Dorsolateral prefrontal cortex (tissue), 120 donors: ENCODE measurements at regions of chr3 and their contacts with region 1.

Region 1: DNA sequence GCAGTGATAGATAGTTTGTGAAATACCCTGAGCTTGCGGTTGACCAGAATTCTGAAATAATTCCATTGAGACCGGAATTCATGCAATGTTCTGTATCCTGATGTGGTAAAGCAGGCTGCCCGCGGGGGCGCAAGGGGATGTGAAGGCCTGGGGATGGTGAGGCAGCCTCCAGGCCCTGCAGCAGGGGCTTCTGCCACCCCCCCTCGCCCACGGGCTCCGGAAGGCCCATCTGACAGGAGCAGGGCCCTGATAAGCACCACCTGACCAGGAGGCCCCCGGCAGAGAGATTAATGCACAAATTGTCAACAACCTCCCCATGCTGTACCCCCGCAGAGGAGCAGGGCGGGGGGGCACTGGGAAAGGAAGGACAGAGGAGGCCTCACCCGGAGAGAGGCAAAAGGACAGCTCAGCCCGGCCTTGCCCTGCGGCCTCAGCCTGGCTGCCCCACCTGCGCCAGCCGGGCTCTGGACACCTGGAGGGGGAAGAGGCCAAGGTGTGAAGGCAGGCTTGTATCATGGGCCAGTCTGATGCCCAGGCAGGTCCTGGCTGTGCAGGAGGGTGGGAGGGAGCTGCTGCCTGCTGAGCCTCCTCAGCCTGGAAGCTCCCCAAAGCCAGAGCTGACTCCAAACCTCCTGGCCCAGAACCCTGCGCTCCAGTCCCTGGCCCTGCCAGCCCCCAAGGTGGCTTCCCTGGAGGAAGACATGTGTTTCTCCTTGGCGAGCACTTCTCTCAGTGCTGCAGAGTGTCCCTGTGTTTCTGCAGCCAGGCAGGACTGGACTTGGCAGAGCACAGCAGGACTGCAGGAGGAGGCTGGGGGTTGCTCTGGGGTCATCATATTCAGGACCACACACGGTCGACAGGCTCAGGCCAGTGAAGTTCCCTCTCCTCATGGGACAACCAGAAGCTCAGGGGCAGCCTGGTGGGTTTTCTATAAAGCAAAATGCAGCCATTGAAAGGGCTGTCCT is 46.5 kb downstream of the RPN1 start:
- DNase-seq: no peak
- H3K4me3 ChIP-seq: no peak overlapping the region
- H3K27ac ChIP-seq: no peak overlapping the region
- H3K27me3 ChIP-seq: no peaks in the 10 kb centered on the region
- CTCF ChIP-seq: no peak

Region 2: GRCh38 chr3:128095222-128095703 is 508.8 kb before region 1 on chr3:
- intact Hi-C with region 1: loop called in 1 of 2 experiments (anchors 1 kb)
- DNase-seq: peak; percentile 78 to 89 (median 87)
- H3K4me3 ChIP-seq: no peak overlapping the region
- H3K27ac ChIP-seq: peak overlapping the region in 29 of 59 donors; percentile 2 to 72 (median 43)
- H3K27me3 ChIP-seq: no peaks in the 10 kb centered on the region
- CTCF ChIP-seq: peak; percentile 60 to 93 (median 86)

Region 3: GRCh38 chr3:128307029-128307633 is 297.0 kb before region 1 on chr3:
- intact Hi-C with region 1: loop called in 1 of 2 experiments (anchors 5 kb)
- DNase-seq: no peak
- H3K4me3 ChIP-seq: no peak overlapping the region
- H3K27ac ChIP-seq: no peak overlapping the region
- H3K27me3 ChIP-seq: no peaks in the 10 kb centered on the region
- CTCF ChIP-seq: peak in 6 of 56 donors; percentile 6 to 41 (median 21)

Region 4: GRCh38 chr3:128426128-128426921 is 177.8 kb before region 1 on chr3:
- intact Hi-C with region 1: loop called in 1 of 2 experiments (anchors 5 kb)
- DNase-seq: peak in 4 of 10 donors; percentile 22 to 73 (median 40)
- H3K4me3 ChIP-seq: peak overlapping the region in 55 of 59 donors; percentile 5 to 63 (median 41)
- H3K27ac ChIP-seq: peak overlapping the region in 1 of 59 donors; percentile 2
- H3K27me3 ChIP-seq: peaks cover 0 to 21% (median 3%) of the 10 kb centered on the region in 45 donors
- CTCF ChIP-seq: peak; percentile 21 to 96 (median 76)